ENCODE measurements at regions of chr19 and their contacts with region 1.

Region 1: GRCh38 chr19:12789904-12790619 is 1.2 kb upstream of the JUNB start:
- DNase-seq: peak; percentile 98
- ATAC-seq: peak; percentile 52
- H3K4me3 Mint-ChIP-seq: peak overlapping the region; percentile 95
- H3K27ac Mint-ChIP-seq: peak overlapping the region; percentile 98
- H3K4me1 Mint-ChIP-seq: peaks cover 34% of the 10 kb centered on the region
- H3K27me3 Mint-ChIP-seq: no peaks in the 10 kb centered on the region
- CTCF ChIP-seq: no peak

Region 2: GRCh38 chr19:12736995-12737834 is 52.8 kb before region 1 on chr19 and contains the start of gene GET3:
- CTCF ChIA-PET with region 1: interaction called, 6 read pairs
- POLR2A ChIA-PET with region 1: interaction called, 18 read pairs
- intact Hi-C with region 1: no loop called
- DNase-seq: peak; percentile 89
- ATAC-seq: peak; percentile 84
- H3K4me3 Mint-ChIP-seq: peak within 1 kb of the TSS; percentile 99
- H3K27ac Mint-ChIP-seq: peak within 1 kb of the TSS; percentile 98
- H3K4me1 Mint-ChIP-seq: peaks cover 35% of the 10 kb centered on the region
- H3K27me3 Mint-ChIP-seq: no peaks in the 10 kb centered on the region
- CTCF ChIP-seq: no peak
- total RNA-seq, gene GET3: 50.7 to 52.2 TPM

Region 3: DNA sequence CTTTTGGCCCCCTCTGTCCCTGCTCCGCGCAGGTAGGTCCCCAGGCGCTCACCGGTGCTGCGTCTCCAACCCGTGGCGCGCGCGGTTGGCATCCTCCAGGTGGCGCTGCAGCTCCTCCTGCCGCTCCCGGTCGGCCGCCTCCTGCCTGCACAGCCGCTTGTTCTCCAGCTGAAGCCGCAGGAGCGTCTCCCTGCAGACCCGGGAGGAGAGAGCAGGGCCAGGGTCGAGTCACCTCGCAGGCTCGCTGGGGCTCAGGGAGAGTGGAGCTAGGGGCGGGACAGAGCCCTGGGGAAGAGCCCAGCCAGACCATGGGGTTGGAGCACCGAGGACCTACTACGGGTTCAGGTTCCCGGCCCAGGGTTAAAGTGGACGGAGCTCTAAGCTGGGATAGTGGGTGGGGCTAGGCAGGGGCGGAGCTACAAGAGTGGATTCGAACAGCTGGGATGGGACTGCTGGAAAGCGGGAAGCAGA is 24.0 kb before region 1 on chr19:
- CTCF ChIA-PET with region 1: interaction called, 480 read pairs
- POLR2A ChIA-PET with region 1: interaction called, 10 read pairs
- intact Hi-C with region 1: no loop called
- DNase-seq: peak; percentile 81
- ATAC-seq: peak; percentile 61
- H3K4me3 Mint-ChIP-seq: no peak overlapping the region
- H3K27ac Mint-ChIP-seq: no peak overlapping the region
- H3K4me1 Mint-ChIP-seq: peaks cover 3% of the 10 kb centered on the region
- H3K27me3 Mint-ChIP-seq: no peaks in the 10 kb centered on the region
- CTCF ChIP-seq: peak; percentile 69

Region 4: GRCh38 chr19:12777217-12778016 is 12.6 kb before region 1 on chr19:
- CTCF ChIA-PET with region 1: interaction called, 326 read pairs
- POLR2A ChIA-PET with region 1: interaction called, 97 read pairs
- intact Hi-C with region 1: loop called (anchors 2 kb)
- DNase-seq: peak; percentile 85
- ATAC-seq: peak; percentile 32
- H3K4me3 Mint-ChIP-seq: peak overlapping the region; percentile 85
- H3K27ac Mint-ChIP-seq: peak overlapping the region; percentile 92
- H3K4me1 Mint-ChIP-seq: peaks cover 45% of the 10 kb centered on the region
- H3K27me3 Mint-ChIP-seq: no peaks in the 10 kb centered on the region
- CTCF ChIP-seq: peak; percentile 99